Mammary epithelial cell (primary cell): ENCODE measurements at regions of chr15 and their contacts with region 1.

Region 1: GRCh38 chr15:98779463-98780071 is 131.2 kb downstream of the IGF1R start:
- DNase-seq: peak; percentile 74
- H3K4me3 ChIP-seq: no peak overlapping the region
- H3K27ac ChIP-seq: peak overlapping the region; percentile 10
- H3K4me1 ChIP-seq: peaks cover 34% of the 10 kb centered on the region
- H3K27me3 ChIP-seq: no peaks in the 10 kb centered on the region
- CTCF ChIP-seq: peak; percentile 97

Region 2: DNA sequence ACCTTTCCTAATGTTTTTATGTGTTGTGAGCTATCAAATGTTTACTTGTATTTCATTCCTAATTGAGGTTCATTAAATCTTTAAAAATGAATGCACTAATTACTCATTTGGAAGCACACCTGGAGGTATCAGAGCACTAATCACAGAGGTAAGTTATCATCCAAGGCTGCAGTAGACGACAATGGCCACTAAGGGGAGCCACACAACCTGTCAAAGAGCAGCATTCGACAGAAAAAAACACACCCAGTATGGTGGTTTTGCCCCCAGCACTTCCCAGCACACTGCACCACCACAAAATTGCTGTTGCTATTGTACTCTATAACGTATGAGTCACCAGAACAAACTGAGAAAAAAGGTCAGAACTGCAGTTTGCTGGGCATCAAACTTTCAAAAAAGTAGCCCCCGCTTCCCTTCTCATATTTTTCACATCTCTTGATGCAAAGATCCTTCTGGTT is 337.2 kb before region 1 on chr15:
- CTCF ChIA-PET with region 1: no interaction called
- dilution Hi-C with region 1: no loop called
- in situ Hi-C with region 1: no loop called
- intact Hi-C with region 1: loop called (anchors 10 kb)
- DNase-seq: peak; percentile 86
- H3K4me3 ChIP-seq: no peak overlapping the region
- H3K27ac ChIP-seq: no peak overlapping the region
- H3K4me1 ChIP-seq: peaks cover 6% of the 10 kb centered on the region
- H3K27me3 ChIP-seq: no peaks in the 10 kb centered on the region
- CTCF ChIP-seq: peak; percentile 89 to 97

Region 3: DNA sequence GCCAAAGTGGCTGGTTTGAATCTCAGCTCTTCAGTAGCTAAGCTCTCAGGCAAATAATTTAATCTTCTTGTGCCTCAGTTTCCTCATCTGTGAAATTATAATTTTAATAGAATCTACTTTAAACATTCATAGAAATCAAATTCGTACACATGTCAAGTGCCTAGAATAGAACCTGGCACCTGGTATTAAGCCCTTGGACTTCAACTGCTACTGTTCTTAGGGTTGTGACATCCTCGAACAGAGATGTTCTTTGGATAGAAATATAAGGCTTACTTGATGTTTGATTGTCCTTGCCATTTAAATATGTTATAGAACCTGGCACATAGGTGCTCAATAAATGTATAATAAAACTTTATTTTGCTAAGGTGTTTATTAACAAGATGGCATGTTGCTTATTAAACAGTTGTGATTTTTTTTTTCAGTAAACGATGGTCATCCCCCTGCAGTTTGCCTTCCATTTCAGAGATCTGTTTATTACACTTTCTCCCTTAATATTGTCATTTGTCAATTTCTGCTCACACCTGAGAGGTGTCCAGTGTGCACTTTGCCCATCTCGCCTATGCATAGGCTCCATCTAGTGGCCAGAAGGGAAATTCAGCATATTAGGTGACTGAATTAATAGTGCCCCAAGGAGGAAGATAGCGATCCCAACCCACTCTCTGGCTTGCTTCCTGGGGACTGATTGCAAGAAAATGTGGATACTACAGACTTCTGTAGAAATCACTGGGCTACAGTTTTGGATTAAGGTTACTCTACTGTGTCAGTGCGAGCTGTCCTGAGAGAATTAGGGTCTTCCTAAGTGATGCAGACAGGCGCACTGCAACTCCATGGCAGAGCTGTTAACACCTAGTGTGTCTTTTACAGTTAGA is 120.5 kb before region 1 on chr15:
- CTCF ChIA-PET with region 1: no interaction called
- dilution Hi-C with region 1: loop called (anchors 10 kb)
- in situ Hi-C with region 1: no loop called
- intact Hi-C with region 1: loop called (anchors 2 kb)
- DNase-seq: peak; percentile 60
- H3K4me3 ChIP-seq: no peak overlapping the region
- H3K27ac ChIP-seq: no peak overlapping the region
- H3K4me1 ChIP-seq: peaks cover 49% of the 10 kb centered on the region
- H3K27me3 ChIP-seq: no peaks in the 10 kb centered on the region
- CTCF ChIP-seq: peak; percentile 91

Region 4: GRCh38 chr15:98719137-98719740 is 60.3 kb before region 1 on chr15:
- CTCF ChIA-PET with region 1: no interaction called
- dilution Hi-C with region 1: no loop called
- in situ Hi-C with region 1: no loop called
- intact Hi-C with region 1: loop called (anchors 2 kb)
- DNase-seq: no peak
- H3K4me3 ChIP-seq: no peak overlapping the region
- H3K27ac ChIP-seq: no peak overlapping the region
- H3K4me1 ChIP-seq: peaks cover 32% of the 10 kb centered on the region
- H3K27me3 ChIP-seq: no peaks in the 10 kb centered on the region
- CTCF ChIP-seq: no peak

Region 5: GRCh38 chr15:98904544-98904943 is 125.0 kb after region 1 on chr15:
- CTCF ChIA-PET with region 1: no interaction called
- dilution Hi-C with region 1: no loop called
- in situ Hi-C with region 1: no loop called
- intact Hi-C with region 1: loop called (anchors 2 kb)
- DNase-seq: peak; percentile 52
- H3K4me3 ChIP-seq: no peak overlapping the region
- H3K27ac ChIP-seq: peak overlapping the region; percentile 94
- H3K4me1 ChIP-seq: peaks cover 69% of the 10 kb centered on the region
- H3K27me3 ChIP-seq: no peaks in the 10 kb centered on the region
- CTCF ChIP-seq: peak; percentile 67 to 84